ENCODE measurements at regions of chr14 and their contacts with region 1.

Region 1: DNA sequence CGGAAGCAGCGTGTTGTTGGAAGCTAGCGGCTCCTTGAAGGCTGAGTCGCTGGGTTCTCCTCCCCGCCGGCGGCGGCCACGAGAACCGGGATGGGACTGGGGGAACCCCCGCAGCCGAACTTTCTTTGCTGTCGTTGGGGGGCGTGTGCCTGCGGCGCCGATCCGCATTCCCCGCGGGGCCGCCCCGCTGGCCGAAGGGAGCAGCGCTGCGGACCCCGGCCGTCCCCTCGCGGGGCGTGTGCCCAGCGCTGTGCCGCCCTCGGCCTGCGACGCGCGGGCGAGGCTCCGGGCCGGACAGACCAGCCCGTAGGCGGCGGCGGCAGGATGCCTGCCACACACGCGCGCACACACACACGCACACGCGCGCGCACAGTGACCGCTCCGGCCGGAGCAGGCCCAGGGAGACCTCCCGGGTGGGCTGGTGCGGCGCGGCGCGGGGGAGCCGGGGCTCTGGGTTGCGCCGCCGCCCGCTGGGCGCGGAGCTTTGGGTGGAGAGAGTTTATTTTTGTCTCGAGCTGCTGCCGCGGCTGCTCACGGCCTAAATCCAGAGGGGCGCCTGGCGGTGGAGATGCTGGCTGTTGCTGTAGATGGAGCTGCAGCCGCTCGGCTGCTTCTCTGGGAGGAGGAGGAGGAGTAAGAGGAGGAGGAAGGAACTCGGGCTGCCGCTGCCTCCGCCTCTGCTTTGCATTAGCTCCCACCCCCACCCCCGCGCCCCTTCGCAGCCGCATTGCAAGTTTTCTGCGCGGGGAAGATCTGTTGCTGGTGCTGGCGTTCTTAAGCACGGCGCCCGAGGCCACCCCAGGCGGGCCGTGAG is at the start of gene SAMD4A:
- DNase-seq: peak; percentile 19 to 84 (median 55)
- ATAC-seq: peak; percentile 41
- H3K4me3 ChIP-seq: peak within 1 kb of the TSS; percentile 80
- H3K4me3 Mint-ChIP-seq: peak within 1 kb of the TSS; percentile 96
- H3K27ac ChIP-seq: peak within 1 kb of the TSS in 1 of 2 donors; percentile 41
- H3K27ac Mint-ChIP-seq: peak within 1 kb of the TSS; percentile 91
- H3K4me1 ChIP-seq: peaks cover 29% of the 10 kb centered on the region
- H3K4me1 Mint-ChIP-seq: peaks cover 15% of the 10 kb centered on the region
- H3K27me3 ChIP-seq: peaks cover 6 to 12% of the 10 kb centered on the region in 2 experiments
- H3K27me3 Mint-ChIP-seq: peaks cover 29% of the 10 kb centered on the region
- CTCF ChIP-seq: no peak
- total RNA-seq, gene SAMD4A: 1.9 to 2.3 TPM

Region 2: GRCh38 chr14:54488646-54489317 is 77.8 kb before region 1 on chr14 and contains the start of gene GMFB:
- CTCF ChIA-PET with region 1: no interaction called
- POLR2A ChIA-PET with region 1: interaction called, 11 read pairs
- intact Hi-C with region 1: loop called in 1 of 2 experiments (anchors 10 kb)
- DNase-seq: peak; percentile 79 to 95 (median 87)
- ATAC-seq: peak; percentile 95
- H3K4me3 ChIP-seq: peak within 1 kb of the TSS; percentile 95
- H3K4me3 Mint-ChIP-seq: peak within 1 kb of the TSS; percentile 99
- H3K27ac ChIP-seq: peak within 1 kb of the TSS; percentile 68 to 84
- H3K27ac Mint-ChIP-seq: peak within 1 kb of the TSS; percentile 86
- H3K4me1 ChIP-seq: peaks cover 32% of the 10 kb centered on the region
- H3K4me1 Mint-ChIP-seq: peaks cover 70% of the 10 kb centered on the region
- H3K27me3 ChIP-seq: no peaks in the 10 kb centered on the region
- H3K27me3 Mint-ChIP-seq: no peaks in the 10 kb centered on the region
- CTCF ChIP-seq: no peak
- total RNA-seq, gene GMFB: 39.5 to 43.5 TPM

Region 3: DNA sequence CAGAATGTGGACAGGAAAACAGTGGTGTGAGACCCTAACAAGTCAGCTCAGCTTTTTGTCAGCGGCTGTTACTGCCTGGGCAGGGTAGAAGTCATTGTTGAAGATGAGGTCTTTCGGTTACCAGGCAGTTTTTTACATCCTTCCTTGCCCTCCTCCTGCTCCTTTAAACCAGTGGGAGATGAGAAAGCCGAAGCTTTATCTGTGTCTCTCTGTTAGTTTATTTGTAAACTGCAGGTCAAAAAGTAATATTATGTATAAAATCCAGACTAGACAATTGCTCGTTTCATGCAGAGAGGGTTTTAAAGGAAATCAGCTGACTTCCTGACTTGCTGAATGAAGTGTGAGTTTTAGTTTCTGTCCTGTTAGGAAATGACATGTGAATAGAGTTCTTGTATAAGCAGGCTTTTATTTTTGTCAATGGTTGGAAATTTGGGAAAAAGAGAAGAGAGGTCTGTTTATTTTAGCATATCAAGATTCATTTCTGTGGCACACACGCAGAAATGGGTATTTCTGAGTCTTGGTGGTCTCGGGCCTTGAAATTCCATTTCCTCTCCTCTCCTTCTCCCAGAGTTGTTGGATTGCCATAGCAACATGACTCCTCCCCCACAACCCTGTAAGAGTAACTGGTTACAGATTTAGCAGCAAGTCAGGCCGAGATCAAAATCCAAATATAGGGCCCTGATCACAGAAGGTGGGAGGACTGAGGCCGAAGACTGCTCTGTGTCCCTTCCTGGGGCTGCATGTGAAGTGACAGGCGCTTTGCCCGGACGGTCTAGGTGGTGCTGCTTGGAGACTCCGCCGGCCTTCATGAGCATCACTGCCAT is 61.1 kb after region 1 on chr14:
- CTCF ChIA-PET with region 1: interaction called, 3 read pairs
- POLR2A ChIA-PET with region 1: interaction called, 23 read pairs
- intact Hi-C with region 1: loop called in 1 of 2 experiments (anchors 5 kb)
- DNase-seq: peak in 8 of 14 experiments; percentile 4 to 80 (median 19)
- ATAC-seq: peak; percentile 78
- H3K4me3 ChIP-seq: peak overlapping the region; percentile 22
- H3K4me3 Mint-ChIP-seq: peak overlapping the region; percentile 81
- H3K27ac ChIP-seq: peak overlapping the region; percentile 39 to 72
- H3K27ac Mint-ChIP-seq: peak overlapping the region; percentile 89
- H3K4me1 ChIP-seq: peaks cover 21% of the 10 kb centered on the region
- H3K4me1 Mint-ChIP-seq: peaks cover 48% of the 10 kb centered on the region
- H3K27me3 ChIP-seq: no peaks in the 10 kb centered on the region
- H3K27me3 Mint-ChIP-seq: no peaks in the 10 kb centered on the region
- CTCF ChIP-seq: no peak

Region 4: DNA sequence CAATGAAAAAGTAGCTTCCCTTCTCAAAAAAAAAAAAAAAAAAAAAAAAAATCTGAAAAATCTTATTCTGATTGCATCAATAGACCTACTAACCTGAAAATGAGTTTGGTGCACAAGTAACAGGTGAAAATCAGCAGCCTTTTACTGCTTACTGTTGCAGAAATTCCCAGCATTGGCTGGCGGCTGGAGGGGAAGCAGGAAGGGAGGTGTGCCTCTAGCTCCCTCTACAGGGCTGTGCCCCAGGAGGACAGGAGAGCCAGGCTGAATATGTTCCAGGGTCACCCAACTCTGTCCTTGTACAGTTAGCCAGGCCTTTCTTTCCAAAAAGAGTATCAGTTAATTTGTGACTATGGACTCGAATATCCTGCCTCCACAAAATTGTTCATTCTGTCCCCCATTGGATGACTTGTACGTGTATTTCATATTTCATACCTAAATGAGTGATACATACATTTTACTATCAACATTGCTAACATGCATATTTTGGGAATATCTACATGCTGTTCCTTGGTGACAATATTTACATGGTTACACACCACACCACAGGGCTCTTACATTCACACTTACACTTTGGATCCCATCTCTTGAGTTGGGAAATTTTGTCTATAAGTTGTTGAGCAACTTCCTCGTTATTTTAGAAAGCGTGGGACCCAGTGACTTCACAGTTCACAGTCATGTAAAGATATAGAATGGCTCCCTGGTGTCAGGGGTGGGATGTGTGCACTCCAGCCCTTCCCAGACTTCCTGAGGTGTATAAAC is 125.1 kb after region 1 on chr14:
- CTCF ChIA-PET with region 1: interaction called, 5 read pairs
- POLR2A ChIA-PET with region 1: no interaction called
- intact Hi-C with region 1: loop called (anchors 1 to 5 kb)
- DNase-seq: peak in 11 of 14 experiments; percentile 13 to 77 (median 45)
- ATAC-seq: peak; percentile 37
- H3K4me3 ChIP-seq: no peak overlapping the region
- H3K4me3 Mint-ChIP-seq: no peak overlapping the region
- H3K27ac ChIP-seq: no peak overlapping the region
- H3K27ac Mint-ChIP-seq: no peak overlapping the region
- H3K4me1 ChIP-seq: no peaks in the 10 kb centered on the region
- H3K4me1 Mint-ChIP-seq: no peaks in the 10 kb centered on the region
- H3K27me3 ChIP-seq: no peaks in the 10 kb centered on the region
- H3K27me3 Mint-ChIP-seq: peaks cover 18% of the 10 kb centered on the region
- CTCF ChIP-seq: peak; percentile 23

Region 5: GRCh38 chr14:54805521-54806322 is 239.1 kb after region 1 on chr14:
- CTCF ChIA-PET with region 1: interaction called, 3 read pairs
- POLR2A ChIA-PET with region 1: no interaction called
- intact Hi-C with region 1: loop called in 1 of 2 experiments (anchors 1 kb)
- DNase-seq: peak; percentile 40 to 83 (median 62)
- ATAC-seq: peak; percentile 80
- H3K4me3 ChIP-seq: no peak overlapping the region
- H3K4me3 Mint-ChIP-seq: no peak overlapping the region
- H3K27ac ChIP-seq: no peak overlapping the region
- H3K27ac Mint-ChIP-seq: no peak overlapping the region
- H3K4me1 ChIP-seq: peaks cover 7% of the 10 kb centered on the region
- H3K4me1 Mint-ChIP-seq: peaks cover 5% of the 10 kb centered on the region
- H3K27me3 ChIP-seq: peaks cover 3 to 4% of the 10 kb centered on the region in 2 experiments
- H3K27me3 Mint-ChIP-seq: peaks cover 10% of the 10 kb centered on the region
- CTCF ChIP-seq: peak; percentile 88

Region 6: GRCh38 chr14:54902521-54903420 is 336.2 kb after region 1 on chr14 and contains the start of gene GCH1:
- CTCF ChIA-PET with region 1: no interaction called
- POLR2A ChIA-PET with region 1: interaction called, 8 read pairs
- intact Hi-C with region 1: loop called (anchors 5 kb)
- DNase-seq: peak; percentile 42 to 91 (median 65)
- ATAC-seq: peak; percentile 69
- H3K4me3 ChIP-seq: peak within 1 kb of the TSS; percentile 97
- H3K4me3 Mint-ChIP-seq: peak within 1 kb of the TSS; percentile 97
- H3K27ac ChIP-seq: peak within 1 kb of the TSS; percentile 92 to 95
- H3K27ac Mint-ChIP-seq: peak within 1 kb of the TSS; percentile 85
- H3K4me1 ChIP-seq: peaks cover 35% of the 10 kb centered on the region
- H3K4me1 Mint-ChIP-seq: peaks cover 24% of the 10 kb centered on the region
- H3K27me3 ChIP-seq: no peaks in the 10 kb centered on the region
- H3K27me3 Mint-ChIP-seq: no peaks in the 10 kb centered on the region
- CTCF ChIP-seq: peak; percentile 80
- total RNA-seq, gene GCH1: 18.4 to 20.4 TPM

Region 7: GRCh38 chr14:55160989-55161388 is 594.4 kb after region 1 on chr14:
- CTCF ChIA-PET with region 1: no interaction called
- POLR2A ChIA-PET with region 1: no interaction called
- intact Hi-C with region 1: loop called in 1 of 2 experiments (anchors 10 kb)
- DNase-seq: peak in 3 of 14 experiments; percentile 62 to 68 (median 66)
- ATAC-seq: peak; percentile 75
- H3K4me3 ChIP-seq: no peak overlapping the region
- H3K4me3 Mint-ChIP-seq: no peak overlapping the region
- H3K27ac ChIP-seq: no peak overlapping the region
- H3K27ac Mint-ChIP-seq: no peak overlapping the region
- H3K4me1 ChIP-seq: no peaks in the 10 kb centered on the region
- H3K4me1 Mint-ChIP-seq: peaks cover 13% of the 10 kb centered on the region
- H3K27me3 ChIP-seq: no peaks in the 10 kb centered on the region
- H3K27me3 Mint-ChIP-seq: no peaks in the 10 kb centered on the region
- CTCF ChIP-seq: peak; percentile 64

Measured in CD4-positive, alpha-beta T cell (primary cell).